ENCODE measurements at regions of chr19 and their contacts with region 1.

Region 1: DNA sequence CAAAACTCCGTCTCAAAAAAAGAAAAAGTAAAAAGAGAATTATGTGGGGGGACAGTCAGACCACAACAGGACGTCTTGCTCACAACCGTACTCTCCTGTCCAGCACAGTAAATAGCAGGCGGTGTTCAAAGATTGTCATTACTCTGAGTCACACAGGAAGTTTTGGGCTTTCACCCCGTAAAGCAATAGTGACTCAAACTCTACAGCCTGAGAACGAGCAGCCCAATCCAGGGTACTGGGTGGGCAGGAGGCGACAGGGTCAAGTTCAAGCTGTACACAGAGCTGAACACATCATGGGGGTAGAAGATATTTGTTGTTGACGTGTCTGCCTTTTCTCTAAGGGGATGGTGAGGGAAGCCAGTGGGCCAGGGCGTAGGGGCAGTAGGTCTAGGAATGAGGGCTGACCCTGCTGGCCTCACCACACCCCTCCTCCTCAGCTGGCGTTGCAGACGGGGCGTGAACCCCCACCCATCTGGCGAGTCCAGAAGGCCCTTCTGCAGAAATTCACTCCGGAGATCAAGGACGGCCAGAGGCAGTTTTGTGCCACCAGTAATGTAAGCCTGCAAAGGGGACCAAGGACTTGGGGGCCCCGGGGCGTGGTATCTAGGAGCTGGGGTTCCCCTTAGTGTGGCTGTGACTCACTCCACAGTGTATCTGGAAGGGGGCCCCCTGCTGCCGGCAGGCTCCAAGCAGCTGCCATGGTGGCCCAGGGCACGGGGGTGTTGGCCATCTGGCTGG is 23.3 kb downstream of the PRR12 start:
- DNase-seq: no peak

Region 2: GRCh38 chr19:49473868-49474544 is 140.3 kb before region 1 on chr19 and contains the start of gene FLT3LG:
- intact Hi-C with region 1: no loop called
- DNase-seq: peak; percentile 93
- total RNA-seq, gene FLT3LG: 7.3 to 12.0 TPM

Region 3: GRCh38 chr19:49655570-49656455 is 41.5 kb after region 1 on chr19:
- intact Hi-C with region 1: loop called in 1 of 2 experiments (anchors 1 kb)
- DNase-seq: no peak

Measured in posterior vena cava (tissue), 2 donors.